Dorsolateral prefrontal cortex (tissue), 120 donors: ENCODE measurements at regions of chrX and their contacts with region 1.

Region 1: DNA sequence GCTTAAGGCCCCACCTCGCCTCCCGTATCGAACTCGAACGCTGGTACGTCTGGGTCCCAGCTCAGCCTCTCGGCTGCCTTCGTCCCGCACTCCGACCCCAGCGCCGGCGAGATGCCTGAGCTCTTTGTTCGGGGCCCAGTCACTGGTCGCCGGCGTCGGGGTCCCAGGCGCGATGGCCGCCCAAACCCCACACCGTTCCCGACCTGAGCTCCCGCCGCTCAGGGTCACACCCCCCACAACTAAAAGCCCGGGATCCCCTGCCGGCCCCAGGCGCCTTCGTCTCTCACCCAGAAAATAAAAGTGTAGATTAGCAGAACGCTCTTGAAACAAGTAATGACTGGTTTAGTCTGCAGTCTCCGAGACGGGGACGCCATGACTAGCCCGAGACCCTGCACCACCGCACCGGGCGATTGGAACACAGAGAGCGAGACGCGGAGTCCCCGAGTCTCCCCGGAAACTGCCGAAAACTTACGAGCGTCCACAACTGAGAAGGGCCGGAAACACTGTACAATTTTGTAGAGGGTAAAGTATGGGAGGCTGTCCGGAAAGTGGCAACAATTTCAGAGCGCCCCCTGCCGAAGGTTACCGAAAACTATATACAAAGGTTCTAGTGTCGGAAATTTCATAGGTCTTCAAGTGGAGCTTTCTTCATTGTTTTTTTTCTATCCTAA is at the start of gene TSPAN6:
- DNase-seq: peak; percentile 11 to 67 (median 58)
- H3K4me3 ChIP-seq: peak within 1 kb of the TSS; percentile 29 to 74 (median 58)
- H3K27ac ChIP-seq: peak within 1 kb of the TSS in 22 of 59 donors; percentile 1 to 73 (median 43)
- H3K27me3 ChIP-seq: peaks cover 0 to 68% (median 14%) of the 10 kb centered on the region in 45 donors
- CTCF ChIP-seq: peak; percentile 30 to 74 (median 53)
- total RNA-seq, gene TSPAN6: 4.6 to 17.7 (median 9.1) TPM

Region 2: GRCh38 chrX:100512471-100512870 is 124.0 kb before region 1 on chrX:
- intact Hi-C with region 1: loop called in 1 of 2 experiments (anchors 5 kb)
- DNase-seq: no peak
- H3K4me3 ChIP-seq: no peak overlapping the region
- H3K27ac ChIP-seq: no peak overlapping the region
- H3K27me3 ChIP-seq: peaks cover 0 to 46% (median 7%) of the 10 kb centered on the region in 45 donors
- CTCF ChIP-seq: peak; percentile 21 to 82 (median 64)

Region 3: GRCh38 chrX:100674705-100675104 is 38.2 kb after region 1 on chrX:
- intact Hi-C with region 1: no loop called
- DNase-seq: no peak
- H3K4me3 ChIP-seq: no peak overlapping the region
- H3K27ac ChIP-seq: no peak overlapping the region
- H3K27me3 ChIP-seq: peaks cover 0 to 90% (median 31%) of the 10 kb centered on the region in 45 donors
- CTCF ChIP-seq: no peak

Region 4: GRCh38 chrX:100750883-100751282 is 114.4 kb after region 1 on chrX:
- intact Hi-C with region 1: no loop called
- DNase-seq: no peak
- H3K4me3 ChIP-seq: no peak overlapping the region
- H3K27ac ChIP-seq: no peak overlapping the region
- H3K27me3 ChIP-seq: peaks cover 0 to 94% (median 44%) of the 10 kb centered on the region in 45 donors
- CTCF ChIP-seq: no peak